ENCODE measurements at regions of chr11 and their contacts with region 1.

Region 1: DNA sequence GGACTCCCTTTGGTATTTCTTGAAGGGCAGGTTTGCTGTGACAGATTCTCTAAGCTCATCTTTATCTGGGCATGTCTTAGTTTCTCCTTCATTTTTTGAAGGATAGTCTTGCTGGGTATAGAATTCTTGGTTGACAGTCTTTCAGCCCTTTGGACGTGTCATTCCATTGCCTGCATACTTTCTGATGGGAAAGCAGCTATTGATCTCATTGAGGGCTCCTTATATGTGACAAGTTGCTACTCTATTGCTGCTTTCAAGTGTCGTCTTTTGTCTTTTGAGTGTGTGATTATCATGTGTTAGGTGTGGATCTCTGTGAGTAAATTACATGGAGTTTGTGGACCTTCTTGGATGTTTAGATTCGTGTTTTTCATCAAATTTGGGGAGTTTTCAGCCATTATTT is 21.9 kb downstream of the IGHMBP2 start:
- DNase-seq: no peak
- H3K4me3 Mint-ChIP-seq: no peak overlapping the region
- H3K27ac Mint-ChIP-seq: no peak overlapping the region
- H3K4me1 Mint-ChIP-seq: no peaks in the 10 kb centered on the region
- H3K27me3 Mint-ChIP-seq: no peaks in the 10 kb centered on the region

Region 2: DNA sequence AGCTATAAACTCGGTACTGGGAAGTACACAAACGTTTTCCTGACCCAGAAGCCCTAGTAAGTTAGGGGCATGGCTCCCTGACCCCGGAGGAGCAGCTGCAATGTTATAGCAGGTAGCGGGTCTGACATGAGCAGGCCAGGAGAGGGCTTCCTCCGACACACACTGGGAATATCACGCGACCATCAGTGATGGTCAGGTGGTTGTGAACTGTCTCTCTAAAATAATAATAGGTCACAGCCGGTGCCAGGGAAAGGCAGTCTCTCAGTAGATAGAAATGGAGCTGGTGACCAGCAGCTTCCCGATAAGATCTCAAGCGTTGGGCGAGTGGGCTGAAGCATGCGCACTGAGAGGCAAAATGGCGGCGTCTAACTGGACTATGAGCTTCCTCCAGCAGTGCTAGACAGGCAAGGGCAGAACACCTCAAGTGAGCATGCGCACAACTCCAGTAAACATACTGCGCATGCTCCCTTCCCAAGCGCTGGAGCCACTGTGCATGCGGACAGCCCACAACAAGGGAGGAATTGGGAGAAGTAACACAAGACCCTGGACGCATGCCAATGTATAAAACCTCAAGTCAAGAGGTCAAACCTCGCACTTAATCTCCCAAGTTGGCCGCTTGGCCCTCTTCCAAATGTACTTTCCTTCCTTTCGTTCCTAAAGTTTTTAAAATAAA is 152.0 kb before region 1 on chr11:
- CTCF ChIA-PET with region 1: interaction called, 11 read pairs
- POLR2A ChIA-PET with region 1: no interaction called
- DNase-seq: no peak
- H3K4me3 Mint-ChIP-seq: no peak overlapping the region
- H3K27ac Mint-ChIP-seq: no peak overlapping the region
- H3K4me1 Mint-ChIP-seq: no peaks in the 10 kb centered on the region
- H3K27me3 Mint-ChIP-seq: no peaks in the 10 kb centered on the region